ENCODE measurements at regions of chr4 and their contacts with region 1.

Region 1: GRCh38 chr4:48578132-48578968 is 88.3 kb downstream of the ZAR1 start:
- DNase-seq: no peak
- ATAC-seq: peak; percentile 85 to 97 (median 90)
- H3K4me3 ChIP-seq: no peak overlapping the region
- H3K27ac ChIP-seq: no peak overlapping the region
- H3K4me1 ChIP-seq: no peaks in the 10 kb centered on the region
- H3K27me3 ChIP-seq: no peaks in the 10 kb centered on the region
- CTCF ChIP-seq: peak; percentile 94

Region 2: DNA sequence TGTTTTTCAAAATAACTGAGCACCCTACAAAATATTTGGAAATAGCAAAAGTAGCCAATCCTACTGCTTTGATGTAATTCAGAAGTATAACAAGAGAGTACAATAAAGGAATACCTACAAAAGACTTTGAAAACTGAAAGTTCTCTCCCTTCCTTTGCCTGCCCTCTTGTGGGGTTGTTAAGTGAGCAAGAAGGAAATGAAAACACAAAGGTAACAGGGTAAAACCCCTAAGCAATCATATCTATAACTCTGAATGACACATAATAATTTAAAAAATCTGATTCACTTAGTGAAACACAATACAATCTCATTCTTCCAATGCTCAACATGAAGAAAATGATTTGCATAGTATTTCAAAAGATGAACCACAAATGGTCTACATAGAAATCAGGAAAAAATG is 103.5 kb after region 1 on chr4:
- intact Hi-C with region 1: loop called (anchors 1 to 10 kb)
- DNase-seq: no peak
- ATAC-seq: peak in 1 of 4 donors; percentile 56
- H3K4me3 ChIP-seq: no peak overlapping the region
- H3K27ac ChIP-seq: no peak overlapping the region
- H3K4me1 ChIP-seq: no peaks in the 10 kb centered on the region
- H3K27me3 ChIP-seq: no peaks in the 10 kb centered on the region
- CTCF ChIP-seq: peak; percentile 43

Region 3: DNA sequence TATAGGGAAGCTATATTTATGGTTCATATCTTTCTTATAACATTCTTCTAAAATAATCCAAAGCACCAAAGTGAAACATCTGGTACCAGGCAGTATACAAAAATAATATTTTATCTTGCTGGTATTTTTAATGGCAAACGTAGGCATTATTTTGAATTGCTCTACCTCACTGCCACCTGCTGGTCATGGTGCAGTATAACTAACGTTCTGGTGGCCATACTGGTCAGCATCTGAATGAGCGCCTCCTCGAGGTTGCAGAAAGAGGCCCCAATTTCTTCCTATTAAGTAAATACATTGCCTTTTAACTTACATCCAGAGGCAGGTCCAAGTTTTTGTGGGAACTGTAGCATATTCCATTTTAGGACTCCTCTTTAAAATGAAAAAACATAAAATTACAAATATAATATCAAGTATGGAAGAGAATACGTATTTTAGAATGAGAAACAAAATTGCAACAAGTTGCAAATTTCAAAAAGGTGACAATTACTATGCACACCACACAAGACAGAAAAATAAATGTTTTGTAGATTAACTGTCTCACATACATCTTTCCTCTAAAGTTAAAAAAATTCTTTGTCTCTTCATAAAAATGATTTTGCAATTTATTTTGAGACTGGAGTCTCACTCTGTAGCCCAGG is 384.8 kb after region 1 on chr4:
- intact Hi-C with region 1: loop called (anchors 2 to 5 kb)
- DNase-seq: peak; percentile 31 to 62
- ATAC-seq: peak; percentile 74 to 92 (median 86)
- H3K4me3 ChIP-seq: no peak overlapping the region
- H3K27ac ChIP-seq: no peak overlapping the region
- H3K4me1 ChIP-seq: no peaks in the 10 kb centered on the region
- H3K27me3 ChIP-seq: no peaks in the 10 kb centered on the region
- CTCF ChIP-seq: peak; percentile 95